ENCODE measurements at regions of chr5 and their contacts with region 1.

Region 1: GRCh38 chr5:168947212-168947868 is 353.6 kb downstream of the SLIT3 start:
- H3K4me3 Mint-ChIP-seq: no peak overlapping the region
- H3K27ac Mint-ChIP-seq: no peak overlapping the region
- H3K4me1 Mint-ChIP-seq: no peaks in the 10 kb centered on the region
- H3K27me3 Mint-ChIP-seq: peaks cover under 1% of the 10 kb centered on the region

Region 2: DNA sequence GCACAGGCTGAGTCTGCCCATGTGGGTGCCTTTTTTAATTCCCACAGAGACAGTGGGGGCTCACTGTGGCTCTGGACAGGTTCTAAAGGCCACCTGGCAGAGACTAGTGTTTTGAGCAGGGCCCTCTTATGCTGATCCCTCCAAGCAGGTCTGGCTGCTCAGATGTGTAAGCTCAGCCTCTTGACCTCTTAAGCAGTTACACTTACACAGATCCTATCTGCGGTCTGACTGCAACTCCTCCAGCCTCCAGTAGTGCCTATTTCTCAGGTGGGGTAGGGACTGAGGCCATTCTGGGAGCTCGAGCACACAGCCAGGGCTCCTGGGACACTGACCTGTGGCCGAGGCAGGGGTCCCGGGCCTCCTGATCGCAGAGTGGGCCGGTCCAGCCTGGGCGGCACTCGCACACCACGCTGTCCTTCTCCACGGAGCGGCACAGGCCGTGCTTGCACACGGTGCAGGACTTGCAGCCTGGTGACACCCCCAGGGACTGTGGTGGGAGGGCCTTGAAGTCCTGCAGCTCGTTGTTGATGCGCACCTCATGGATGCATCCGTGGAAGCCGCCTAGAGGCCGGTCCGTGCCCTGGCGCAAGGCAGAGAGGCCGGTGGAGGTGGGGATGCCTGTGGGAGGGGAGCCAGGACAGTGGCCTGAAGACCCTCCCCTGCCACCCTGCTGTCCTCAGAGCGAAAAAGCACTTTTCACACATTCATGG is 276.3 kb before region 1 on chr5:
- intact Hi-C with region 1: no loop called
- H3K4me3 Mint-ChIP-seq: no peak overlapping the region
- H3K27ac Mint-ChIP-seq: no peak overlapping the region
- H3K4me1 Mint-ChIP-seq: no peaks in the 10 kb centered on the region
- H3K27me3 Mint-ChIP-seq: no peaks in the 10 kb centered on the region

Region 3: DNA sequence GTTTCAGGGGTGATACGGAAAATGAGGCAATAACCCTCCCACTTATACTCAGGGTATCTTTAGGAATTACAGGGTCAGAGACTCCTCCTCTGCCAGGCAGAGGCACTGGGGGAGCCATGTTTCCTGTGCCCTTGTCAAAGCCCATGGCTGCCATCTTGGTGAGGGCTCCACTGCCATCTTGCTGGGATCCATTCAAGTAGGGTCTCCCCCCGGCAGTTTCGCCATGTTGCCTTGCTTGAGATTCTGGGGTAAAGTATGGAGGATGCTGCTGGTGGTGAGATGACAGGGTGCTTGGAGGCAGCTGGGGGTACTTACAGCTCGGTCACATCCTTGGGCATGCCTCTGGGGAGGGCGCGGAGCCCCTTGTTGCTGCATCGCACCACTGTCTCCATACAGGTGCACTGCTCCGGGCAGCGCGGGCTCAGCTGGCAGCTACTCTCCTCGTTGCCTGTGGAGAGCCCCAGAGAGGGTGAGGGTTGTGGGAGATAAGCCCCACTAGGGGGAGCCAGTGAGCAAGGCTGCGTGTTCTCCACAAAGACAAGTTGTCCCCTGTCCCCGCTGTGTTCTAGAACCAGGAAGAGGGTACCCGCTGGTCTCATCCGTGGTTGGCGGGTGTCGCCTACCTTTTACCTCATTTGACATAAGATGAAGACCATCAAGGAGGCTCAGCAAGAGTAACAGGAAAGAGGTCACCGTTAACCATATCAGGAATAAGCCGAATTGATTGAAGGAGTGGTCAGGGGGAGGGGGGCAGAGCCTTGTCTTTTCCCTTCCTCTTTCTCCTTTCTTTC is 199.2 kb before region 1 on chr5:
- intact Hi-C with region 1: loop called (anchors 2 kb)
- H3K4me3 Mint-ChIP-seq: no peak overlapping the region
- H3K27ac Mint-ChIP-seq: no peak overlapping the region
- H3K4me1 Mint-ChIP-seq: peaks cover 4% of the 10 kb centered on the region
- H3K27me3 Mint-ChIP-seq: peaks cover 3% of the 10 kb centered on the region

Region 4: DNA sequence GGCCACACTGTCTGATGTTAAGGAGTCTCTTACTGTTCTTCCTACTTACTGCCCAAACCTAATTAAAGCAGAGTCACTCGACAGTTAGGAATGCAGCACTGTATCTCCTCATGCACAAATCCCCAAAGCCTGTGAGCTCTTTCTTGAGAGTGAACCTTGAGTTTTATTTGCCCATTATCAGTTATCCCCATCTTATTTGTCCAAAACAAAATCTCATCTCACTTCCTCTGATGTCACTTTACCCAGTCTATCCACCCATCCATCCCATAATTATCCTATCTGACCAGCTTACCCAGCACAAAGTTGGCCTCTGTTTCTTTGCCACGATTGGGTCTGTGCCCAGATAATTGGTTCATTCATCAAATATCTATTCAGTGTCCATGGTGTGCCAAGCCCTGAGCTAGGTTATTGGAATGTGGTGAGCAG is 102.8 kb after region 1 on chr5:
- intact Hi-C with region 1: no loop called
- H3K4me3 Mint-ChIP-seq: no peak overlapping the region
- H3K27ac Mint-ChIP-seq: no peak overlapping the region
- H3K4me1 Mint-ChIP-seq: no peaks in the 10 kb centered on the region
- H3K27me3 Mint-ChIP-seq: no peaks in the 10 kb centered on the region

Region 5: GRCh38 chr5:169173372-169173771 is 226.0 kb after region 1 on chr5:
- intact Hi-C with region 1: no loop called
- H3K4me3 Mint-ChIP-seq: no peak overlapping the region
- H3K27ac Mint-ChIP-seq: no peak overlapping the region
- H3K4me1 Mint-ChIP-seq: no peaks in the 10 kb centered on the region
- H3K27me3 Mint-ChIP-seq: no peaks in the 10 kb centered on the region